ENCODE measurements at regions of chr10 and their contacts with region 1.

Region 1: GRCh38 chr10:112177247-112177646 is 6.3 kb downstream of the GPAM start:
- DNase-seq: no peak
- ATAC-seq: peak; percentile 72

Region 2: DNA sequence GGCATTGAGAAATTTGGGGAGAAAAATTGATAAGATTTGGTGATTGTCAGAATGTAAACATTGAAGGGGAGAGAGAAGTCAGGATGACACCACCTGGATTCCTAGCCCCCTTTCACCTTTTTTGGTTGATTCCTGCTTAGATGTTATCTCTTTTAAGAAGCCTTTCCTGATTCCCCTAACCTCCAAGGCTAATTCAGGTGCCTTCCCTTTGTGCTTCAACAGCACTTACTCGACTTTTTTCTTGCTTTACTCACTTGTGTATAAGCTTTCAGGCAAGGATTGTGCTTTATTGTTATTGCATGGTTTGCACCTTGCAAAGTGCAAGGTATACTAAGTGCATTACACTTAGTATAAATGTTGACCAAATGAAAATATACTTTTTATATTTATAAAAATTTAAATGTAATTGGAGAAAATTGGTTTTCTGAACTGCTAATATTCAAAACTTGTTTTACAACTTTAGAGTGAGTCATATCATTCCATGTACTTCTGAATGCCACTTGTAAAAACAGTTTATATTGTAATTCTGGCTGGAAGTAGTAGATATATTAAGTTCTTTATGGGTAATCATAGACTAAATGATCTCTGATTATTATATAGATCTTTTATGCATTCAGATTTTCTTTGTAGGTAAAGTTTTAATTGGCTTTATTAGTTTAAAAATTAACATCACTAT is 1244.6 kb before region 1 on chr10:
- intact Hi-C with region 1: no loop called
- DNase-seq: no peak
- ATAC-seq: no peak

Region 3: DNA sequence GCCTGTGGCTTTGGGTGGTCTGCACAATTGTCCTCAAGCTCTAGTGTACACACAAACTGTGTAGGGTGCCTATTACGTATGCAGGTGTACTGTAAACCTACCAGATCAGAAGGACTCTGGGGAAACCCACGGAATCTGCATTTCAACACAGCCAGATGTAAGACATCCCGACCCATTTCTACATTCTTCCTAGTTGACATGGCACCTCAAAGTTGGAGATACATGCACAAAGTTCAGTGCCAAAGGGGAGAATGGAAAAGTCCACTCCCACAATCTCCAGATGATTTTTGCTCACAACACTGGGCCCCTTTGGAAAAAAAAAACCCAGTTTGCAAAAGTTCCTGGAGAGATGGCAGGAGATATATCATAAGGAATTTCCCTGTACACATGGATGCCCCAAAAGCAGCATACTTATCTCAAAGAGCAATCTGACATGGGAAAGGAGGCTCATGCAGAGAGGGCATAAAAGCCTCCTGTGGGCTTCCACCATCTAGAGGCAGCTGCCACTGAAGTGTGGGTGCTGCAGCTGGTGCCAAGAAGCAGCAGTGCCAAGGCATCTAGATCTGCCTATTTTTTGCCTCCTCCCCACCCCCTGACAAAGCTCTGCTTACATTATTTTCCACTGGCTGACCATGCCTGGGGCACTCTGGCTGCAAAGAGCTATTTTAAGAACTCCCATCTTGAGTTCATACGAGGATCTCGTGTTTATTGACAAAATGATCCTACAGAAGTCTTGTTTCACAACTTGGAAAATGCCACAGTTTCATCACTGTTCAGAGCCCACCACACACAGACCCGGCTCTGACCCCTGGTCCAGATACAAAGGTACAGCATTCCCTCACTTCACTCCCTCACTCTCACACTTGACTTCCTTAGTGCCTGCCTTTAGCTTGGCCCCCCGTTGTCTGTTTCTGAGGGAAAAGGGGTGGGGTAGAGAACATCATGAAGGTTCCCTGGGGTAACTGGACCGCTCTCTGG is 118.9 kb after region 1 on chr10:
- intact Hi-C with region 1: loop called (anchors 5 kb)
- DNase-seq: no peak
- ATAC-seq: peak; percentile 92

Region 4: DNA sequence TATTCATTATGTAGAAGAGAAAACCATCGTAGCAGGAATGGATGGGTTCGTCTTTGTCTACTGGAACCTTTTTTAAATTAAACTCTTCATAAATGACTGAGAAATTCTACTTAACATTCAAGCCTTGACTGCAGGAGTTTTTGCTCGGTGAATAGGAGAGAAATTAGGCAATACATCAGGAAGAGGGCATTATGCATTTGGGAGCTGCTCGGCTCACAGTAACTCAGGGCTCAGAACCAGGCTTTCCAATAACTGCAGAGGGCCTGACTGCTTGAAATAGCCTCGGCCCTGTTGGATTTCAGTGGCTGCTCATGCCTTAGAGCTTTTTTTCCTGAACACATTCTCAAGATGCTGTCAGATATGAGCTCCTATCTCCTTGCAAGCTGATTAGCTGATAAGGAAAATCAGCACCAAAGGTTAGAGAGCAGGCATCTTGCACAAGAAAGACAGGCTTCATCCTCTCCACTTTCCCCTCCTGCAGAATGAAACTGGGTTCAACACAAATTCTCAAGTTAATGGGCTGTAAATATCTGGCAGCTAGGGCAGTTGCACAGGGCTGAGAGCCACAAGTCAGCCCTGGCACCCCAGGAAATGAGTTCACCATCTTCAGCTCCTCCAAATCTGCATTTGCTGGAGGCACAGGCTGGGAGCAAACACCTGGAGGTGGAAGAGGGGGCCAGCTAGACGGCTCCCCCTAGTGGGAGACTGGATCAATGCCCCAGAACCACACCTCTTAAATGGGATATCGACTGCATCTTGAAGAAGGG is 130.3 kb after region 1 on chr10:
- intact Hi-C with region 1: loop called (anchors 1 kb)
- DNase-seq: no peak
- ATAC-seq: peak; percentile 62

Region 5: DNA sequence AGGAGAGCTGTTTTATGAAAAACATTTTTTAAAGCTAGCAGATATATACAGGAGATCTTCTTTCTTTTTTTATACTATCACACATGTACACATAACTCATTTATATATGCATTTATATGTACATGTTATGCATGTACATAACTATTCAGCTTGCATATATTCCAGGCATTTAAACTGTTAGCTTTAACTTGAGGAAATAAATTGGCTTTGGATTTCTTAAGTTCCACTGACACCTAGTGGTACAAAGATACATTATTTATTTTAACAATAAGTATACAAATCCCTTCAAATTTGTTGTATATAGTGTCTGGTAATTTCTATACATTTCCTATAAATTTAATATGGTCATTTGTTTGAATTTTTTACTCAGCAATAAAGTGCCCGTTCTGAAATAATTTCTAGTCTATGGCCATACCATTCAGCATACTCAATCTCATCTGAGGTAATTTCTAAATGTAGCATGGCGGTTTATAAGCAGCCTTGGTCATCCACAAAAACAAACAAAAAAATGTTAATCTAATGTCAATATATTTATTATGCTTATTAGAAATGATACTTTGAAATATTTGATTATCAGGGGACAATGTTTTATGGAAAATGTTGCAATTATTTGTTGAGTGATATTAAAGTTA is 257.9 kb after region 1 on chr10:
- intact Hi-C with region 1: loop called (anchors 5 kb)
- DNase-seq: no peak
- ATAC-seq: no peak

Measured in Right ventricle myocardium inferior (tissue), 1 donor.